ENCODE measurements at regions of chr5 and their contacts with region 1.

Region 1: DNA sequence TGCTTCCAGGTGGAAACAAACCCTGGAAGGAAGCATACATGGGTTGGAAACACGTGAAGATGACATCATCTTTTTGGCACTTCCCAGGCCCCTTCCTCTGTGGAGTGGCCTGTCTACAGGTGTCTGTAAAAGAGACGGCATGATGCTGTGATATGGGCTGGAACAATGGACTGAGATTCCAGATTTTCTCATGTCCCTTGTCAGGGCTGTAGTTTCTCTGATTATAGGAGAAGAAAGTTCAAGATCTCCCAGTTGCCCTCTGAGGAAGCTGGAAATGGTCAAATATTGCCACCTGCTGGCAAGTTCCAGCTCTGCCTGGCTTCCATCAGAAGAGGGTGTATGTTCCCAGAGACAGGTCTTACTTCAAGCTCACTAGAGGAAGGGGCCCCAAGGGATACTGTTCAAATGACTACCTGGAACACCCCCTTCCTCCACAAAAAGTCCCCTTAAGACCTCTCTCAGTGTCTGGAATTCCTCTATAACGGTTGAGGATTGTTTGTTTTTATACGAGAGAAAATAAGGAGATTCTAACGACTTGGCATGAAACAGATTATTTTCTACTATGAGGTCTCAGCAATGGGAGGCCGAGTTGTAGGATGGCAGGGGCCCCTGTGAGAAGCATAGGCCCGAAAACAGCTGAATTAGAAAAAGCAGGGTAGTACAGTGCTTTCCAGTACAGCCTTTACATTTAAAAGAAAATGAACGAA is 7.3 kb upstream of the ANXA6 start:
- DNase-seq: peak; percentile 81
- ATAC-seq: peak; percentile 96
- H3K4me3 Mint-ChIP-seq: no peak overlapping the region
- H3K27ac Mint-ChIP-seq: no peak overlapping the region
- H3K4me1 Mint-ChIP-seq: peaks cover 6% of the 10 kb centered on the region
- H3K27me3 Mint-ChIP-seq: 0 out of 2 replicates have a peak, but pooled peaks cover 4% of the 10 kb centered on the region
- CTCF ChIP-seq: peak; percentile 69

Region 2: GRCh38 chr5:150258130-150258529 is 906.7 kb before region 1 on chr5:
- CTCF ChIA-PET with region 1: no interaction called
- POLR2A ChIA-PET with region 1: no interaction called
- DNase-seq: no peak
- ATAC-seq: no peak
- H3K4me3 Mint-ChIP-seq: no peak overlapping the region
- H3K27ac Mint-ChIP-seq: no peak overlapping the region
- H3K4me1 Mint-ChIP-seq: peaks cover 5% of the 10 kb centered on the region
- H3K27me3 Mint-ChIP-seq: no peaks in the 10 kb centered on the region
- CTCF ChIP-seq: no peak

Region 3: GRCh38 chr5:151002250-151002649 is 162.6 kb before region 1 on chr5:
- CTCF ChIA-PET with region 1: interaction called, 21 read pairs
- POLR2A ChIA-PET with region 1: interaction called, 4 read pairs
- DNase-seq: no peak
- ATAC-seq: peak; percentile 75
- H3K4me3 Mint-ChIP-seq: no peak overlapping the region
- H3K27ac Mint-ChIP-seq: no peak overlapping the region
- H3K4me1 Mint-ChIP-seq: peaks cover 12% of the 10 kb centered on the region
- H3K27me3 Mint-ChIP-seq: no peaks in the 10 kb centered on the region
- CTCF ChIP-seq: no peak

Region 4: GRCh38 chr5:151126199-151126645 is 38.6 kb before region 1 on chr5:
- CTCF ChIA-PET with region 1: interaction called, 191 read pairs
- POLR2A ChIA-PET with region 1: no interaction called
- DNase-seq: peak; percentile 77
- ATAC-seq: peak; percentile 80
- H3K4me3 Mint-ChIP-seq: no peak overlapping the region
- H3K27ac Mint-ChIP-seq: no peak overlapping the region
- H3K4me1 Mint-ChIP-seq: peaks cover 1% of the 10 kb centered on the region; the same call in 1 of the 2 replicates
- H3K27me3 Mint-ChIP-seq: no peaks in the 10 kb centered on the region
- CTCF ChIP-seq: peak; percentile 86

Region 5: DNA sequence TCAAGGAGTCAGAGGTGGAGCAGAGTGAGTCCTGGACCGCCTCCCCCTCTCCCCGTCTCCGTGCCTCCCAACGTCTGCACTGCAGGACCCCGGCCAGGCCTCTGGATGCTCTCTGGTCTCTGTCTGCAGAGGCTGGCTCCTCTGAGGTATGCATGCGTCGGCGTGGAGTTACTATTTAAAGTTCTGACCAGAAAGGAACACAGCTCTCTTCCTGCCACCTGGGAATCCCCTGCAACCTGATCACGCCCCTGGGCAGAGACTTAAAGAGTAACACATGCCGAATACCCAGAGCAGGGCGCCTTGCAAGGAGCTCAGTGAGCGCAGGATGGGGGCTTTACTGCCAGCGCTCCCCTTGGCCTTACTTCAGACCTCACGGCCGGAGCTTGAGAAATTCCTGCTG is 23.3 kb before region 1 on chr5:
- CTCF ChIA-PET with region 1: interaction called, 22 read pairs
- POLR2A ChIA-PET with region 1: no interaction called
- DNase-seq: peak; percentile 60
- ATAC-seq: peak; percentile 85
- H3K4me3 Mint-ChIP-seq: no peak overlapping the region; the same call in 1 of the 2 replicates
- H3K27ac Mint-ChIP-seq: peak overlapping the region; percentile 93
- H3K4me1 Mint-ChIP-seq: peaks cover 18% of the 10 kb centered on the region
- H3K27me3 Mint-ChIP-seq: no peaks in the 10 kb centered on the region
- CTCF ChIP-seq: no peak

Region 6: DNA sequence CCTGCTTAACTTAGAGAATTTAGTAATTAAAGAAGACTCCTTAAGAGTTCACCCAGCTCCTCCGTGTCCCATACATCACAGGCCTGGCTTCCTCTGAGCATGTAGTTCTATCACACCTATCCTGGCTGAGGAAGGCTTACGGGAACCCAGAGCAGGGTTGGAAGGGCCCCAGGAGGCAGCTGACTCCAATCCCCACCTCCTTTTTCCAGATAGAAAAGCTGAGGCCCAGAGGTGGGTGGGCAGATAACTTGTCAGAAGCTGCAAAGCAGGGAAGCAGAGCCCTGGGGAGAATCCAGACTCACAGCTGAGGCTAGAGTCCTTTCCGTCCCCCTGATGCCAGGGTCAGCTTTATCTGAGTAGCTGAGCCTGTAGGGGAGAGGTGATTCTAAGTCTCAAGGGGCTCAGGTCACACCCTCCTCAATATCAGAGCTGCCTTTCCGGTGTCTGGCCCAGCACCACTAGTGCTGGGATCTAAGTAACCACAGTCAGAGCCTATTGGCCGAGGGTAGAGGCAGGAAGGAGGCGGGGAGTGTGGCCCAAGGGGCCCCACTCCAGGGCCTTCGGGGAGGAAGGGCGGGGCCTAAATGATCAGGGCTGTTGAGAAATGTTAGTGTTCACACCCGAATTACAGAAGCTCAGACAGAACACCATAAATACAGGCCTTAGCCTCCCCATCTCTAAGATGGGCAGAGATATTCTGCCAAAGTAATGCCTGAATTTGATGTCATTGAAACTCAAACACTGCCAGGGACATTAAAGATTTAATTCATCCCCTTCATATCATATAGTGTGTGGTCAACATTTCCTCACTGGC is 49.2 kb after region 1 on chr5:
- CTCF ChIA-PET with region 1: interaction called, 10 read pairs
- POLR2A ChIA-PET with region 1: interaction called, 4 read pairs
- DNase-seq: peak; percentile 40
- ATAC-seq: peak; percentile 99
- H3K4me3 Mint-ChIP-seq: no peak overlapping the region
- H3K27ac Mint-ChIP-seq: no peak overlapping the region
- H3K4me1 Mint-ChIP-seq: peaks cover 8% of the 10 kb centered on the region
- H3K27me3 Mint-ChIP-seq: no peaks in the 10 kb centered on the region
- CTCF ChIP-seq: no peak

Region 7: DNA sequence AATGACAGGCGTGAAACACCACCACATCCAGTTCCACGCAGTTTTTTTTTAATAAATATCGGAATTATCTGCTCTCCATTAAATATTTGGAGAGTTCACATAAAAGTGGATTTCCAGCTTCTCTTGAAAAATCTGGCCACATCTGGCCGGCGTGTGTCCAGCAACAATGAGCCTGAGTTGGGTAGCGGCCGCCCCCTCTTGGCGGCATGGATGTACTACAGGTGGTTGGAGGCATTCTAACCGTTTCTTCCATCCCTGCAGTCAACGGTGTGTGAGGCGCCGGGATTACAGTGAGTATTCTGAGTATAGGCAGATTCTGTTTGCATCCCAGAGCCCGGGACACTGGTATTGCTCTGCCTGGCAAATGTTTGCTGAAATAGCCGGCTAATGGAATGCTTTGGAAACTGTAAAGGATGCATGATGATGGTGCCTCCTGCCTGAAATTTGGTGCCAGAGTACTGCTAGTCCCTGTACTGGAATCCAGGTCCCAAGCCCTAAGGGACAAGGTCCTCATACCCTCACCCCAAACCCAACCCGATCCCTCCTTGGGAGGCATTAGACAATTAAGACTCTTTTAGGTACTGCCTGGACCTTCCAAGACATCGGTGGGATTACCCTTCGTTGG is 74.5 kb after region 1 on chr5:
- CTCF ChIA-PET with region 1: interaction called, 34 read pairs
- POLR2A ChIA-PET with region 1: no interaction called
- DNase-seq: peak; percentile 81
- ATAC-seq: peak; percentile 83
- H3K4me3 Mint-ChIP-seq: no peak overlapping the region
- H3K27ac Mint-ChIP-seq: no peak overlapping the region; the same call in 1 of the 2 replicates
- H3K4me1 Mint-ChIP-seq: peaks cover 35% of the 10 kb centered on the region
- H3K27me3 Mint-ChIP-seq: no peaks in the 10 kb centered on the region
- CTCF ChIP-seq: peak; percentile 91

Region 8: DNA sequence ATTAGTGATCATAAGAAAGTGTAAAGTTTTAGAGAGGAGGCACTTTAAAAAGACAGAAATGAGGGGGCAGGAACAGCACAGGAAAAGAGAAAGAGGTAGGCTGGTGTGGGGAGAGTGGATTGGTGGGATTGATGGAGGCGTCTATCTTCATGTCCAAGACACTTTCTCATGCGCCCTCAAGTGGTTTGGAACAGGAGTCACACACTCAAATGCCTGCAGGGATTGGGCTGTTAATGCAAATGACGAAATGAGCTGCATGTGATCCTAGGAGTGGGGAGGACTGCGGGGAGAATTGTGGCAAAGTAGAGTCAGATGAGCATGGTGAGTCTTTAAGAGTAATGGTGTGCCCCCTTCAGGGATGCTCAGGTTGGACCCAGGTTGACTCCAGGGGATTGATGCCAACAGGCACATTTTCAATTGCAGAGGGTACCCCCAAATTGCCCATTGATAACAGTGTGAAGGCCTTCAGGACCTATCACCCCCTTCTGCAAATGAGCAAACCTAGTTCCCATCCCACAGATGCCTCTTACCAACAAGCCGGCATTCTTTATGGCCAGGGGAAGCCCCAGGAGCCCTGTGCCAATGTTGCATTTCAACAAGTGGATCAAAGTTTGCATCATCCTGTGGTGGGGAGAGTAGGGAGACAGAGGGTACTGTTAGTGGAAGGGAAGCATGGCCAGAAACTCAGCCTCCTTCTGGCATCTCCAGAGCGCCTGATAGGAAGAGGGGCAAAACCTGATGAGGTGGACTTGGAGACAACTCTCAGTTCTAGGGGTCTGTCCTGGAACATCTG is 133.4 kb after region 1 on chr5:
- CTCF ChIA-PET with region 1: interaction called, 11 read pairs
- POLR2A ChIA-PET with region 1: no interaction called
- DNase-seq: peak; percentile 49
- ATAC-seq: peak; percentile 87
- H3K4me3 Mint-ChIP-seq: no peak overlapping the region
- H3K27ac Mint-ChIP-seq: no peak overlapping the region
- H3K4me1 Mint-ChIP-seq: peaks cover 11% of the 10 kb centered on the region
- H3K27me3 Mint-ChIP-seq: no peaks in the 10 kb centered on the region; the same call in 1 of the 2 replicates
- CTCF ChIP-seq: no peak

Measured in WTC11 (cell line).